ENCODE measurements at regions of chr14 and their contacts with region 1.

Region 1: DNA sequence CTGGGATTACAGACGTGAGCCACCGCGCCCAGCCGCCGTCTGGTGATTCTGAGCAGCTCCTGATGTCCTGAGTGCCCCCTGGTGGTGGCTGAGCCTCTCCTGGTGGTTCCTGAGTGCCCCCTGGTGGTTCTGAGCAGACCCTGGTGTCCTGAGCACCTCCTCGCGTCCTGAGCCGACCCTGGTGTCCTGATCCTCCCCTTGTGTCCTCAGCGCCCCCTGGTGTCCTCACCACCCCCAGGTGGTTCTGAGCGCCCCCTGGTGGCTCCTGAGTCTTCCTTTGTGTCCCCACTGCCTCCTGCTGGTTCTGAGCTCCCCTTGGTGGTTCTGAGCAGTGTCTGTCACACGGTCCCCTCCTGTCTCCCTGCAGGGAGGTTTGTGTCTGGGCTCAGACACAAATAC is 1304.9 kb downstream of the TMEM121 start:
- DNase-seq: peak in 11 of 14 experiments; percentile 26 to 80 (median 47)
- ATAC-seq: peak; percentile 58
- H3K4me3 ChIP-seq: no peak overlapping the region
- H3K4me3 Mint-ChIP-seq: no peak overlapping the region
- H3K27ac ChIP-seq: no peak overlapping the region
- H3K27ac Mint-ChIP-seq: peak overlapping the region; percentile 35
- H3K4me1 ChIP-seq: no peaks in the 10 kb centered on the region
- H3K4me1 Mint-ChIP-seq: no peaks in the 10 kb centered on the region
- H3K27me3 ChIP-seq: no peaks in the 10 kb centered on the region
- H3K27me3 Mint-ChIP-seq: no peaks in the 10 kb centered on the region
- CTCF ChIP-seq: peak; percentile 30

Region 2: DNA sequence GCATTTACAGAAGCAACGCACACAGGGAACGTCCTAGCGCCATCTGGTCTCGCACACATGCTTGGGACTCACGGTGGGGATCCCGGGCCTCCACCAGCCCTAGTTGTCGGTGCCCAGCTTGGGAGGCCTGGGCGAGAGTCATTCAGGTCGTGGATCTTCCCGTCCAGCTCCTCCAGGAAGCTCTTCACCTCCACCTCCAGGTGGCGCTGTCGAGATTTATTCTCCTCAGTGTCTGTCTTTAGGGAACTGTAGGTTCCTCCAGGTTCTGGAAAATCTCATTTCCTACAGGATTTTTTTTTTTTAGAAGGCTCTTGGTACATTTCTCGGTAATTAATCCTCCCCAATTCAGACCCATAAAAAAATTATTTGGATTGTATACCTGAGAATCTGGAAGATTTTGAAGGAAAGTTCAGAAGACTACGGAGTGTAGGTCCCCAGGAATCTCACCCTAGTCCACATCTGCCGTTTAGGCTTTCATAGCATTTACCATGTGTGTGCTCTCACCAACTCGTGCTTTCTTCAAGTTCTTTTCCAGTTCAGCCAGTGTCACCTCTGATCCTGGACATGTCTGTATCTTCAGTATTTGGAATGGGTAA is 394.9 kb before region 1 on chr14:
- CTCF ChIA-PET with region 1: no interaction called
- POLR2A ChIA-PET with region 1: no interaction called
- intact Hi-C with region 1: no loop called
- DNase-seq: peak; percentile 48 to 77 (median 67)
- ATAC-seq: no peak
- H3K4me3 ChIP-seq: no peak overlapping the region
- H3K4me3 Mint-ChIP-seq: no peak overlapping the region
- H3K27ac ChIP-seq: no peak overlapping the region
- H3K27ac Mint-ChIP-seq: no peak overlapping the region
- H3K4me1 ChIP-seq: no peaks in the 10 kb centered on the region
- H3K4me1 Mint-ChIP-seq: peaks cover 5% of the 10 kb centered on the region
- H3K27me3 ChIP-seq: no peaks in the 10 kb centered on the region
- H3K27me3 Mint-ChIP-seq: peaks cover 24% of the 10 kb centered on the region
- CTCF ChIP-seq: peak; percentile 74

Region 3: DNA sequence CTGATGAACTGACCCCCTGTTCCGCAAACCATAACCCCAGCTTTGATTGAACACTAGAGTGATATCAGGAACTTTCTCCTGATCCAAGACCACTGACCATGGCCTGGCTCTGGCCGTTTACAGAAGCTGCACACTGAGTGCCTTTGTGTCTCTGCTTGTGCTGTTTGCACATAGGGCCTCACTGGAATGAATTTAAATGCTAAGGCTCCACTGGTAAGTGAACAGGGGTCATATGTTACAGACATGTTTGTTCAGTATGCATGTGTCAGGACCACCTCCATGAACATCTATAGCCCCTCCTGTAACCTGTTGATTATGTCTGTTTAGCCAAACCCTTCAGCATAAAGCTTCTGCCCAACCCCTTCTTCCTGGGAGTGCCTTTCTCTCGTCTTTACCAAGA is 65.2 kb before region 1 on chr14:
- CTCF ChIA-PET with region 1: no interaction called
- POLR2A ChIA-PET with region 1: no interaction called
- intact Hi-C with region 1: no loop called
- DNase-seq: no peak
- ATAC-seq: no peak
- H3K4me3 ChIP-seq: no peak overlapping the region
- H3K4me3 Mint-ChIP-seq: peak overlapping the region; percentile 52
- H3K27ac ChIP-seq: no peak overlapping the region
- H3K27ac Mint-ChIP-seq: no peak overlapping the region
- H3K4me1 ChIP-seq: peaks cover 26% of the 10 kb centered on the region
- H3K4me1 Mint-ChIP-seq: peaks cover 52% of the 10 kb centered on the region
- H3K27me3 ChIP-seq: no peaks in the 10 kb centered on the region
- H3K27me3 Mint-ChIP-seq: no peaks in the 10 kb centered on the region
- CTCF ChIP-seq: no peak

Region 4: GRCh38 chr14:106790189-106791036 is 40.9 kb before region 1 on chr14:
- CTCF ChIA-PET with region 1: interaction called, 10 read pairs
- POLR2A ChIA-PET with region 1: no interaction called
- intact Hi-C with region 1: no loop called
- DNase-seq: peak; percentile 52 to 86 (median 66)
- ATAC-seq: peak; percentile 69
- H3K4me3 ChIP-seq: no peak overlapping the region
- H3K4me3 Mint-ChIP-seq: no peak overlapping the region
- H3K27ac ChIP-seq: no peak overlapping the region
- H3K27ac Mint-ChIP-seq: no peak overlapping the region
- H3K4me1 ChIP-seq: peaks cover 9% of the 10 kb centered on the region
- H3K4me1 Mint-ChIP-seq: peaks cover 16% of the 10 kb centered on the region
- H3K27me3 ChIP-seq: no peaks in the 10 kb centered on the region
- H3K27me3 Mint-ChIP-seq: peaks cover 10% of the 10 kb centered on the region
- CTCF ChIP-seq: peak; percentile 90

Region 5: DNA sequence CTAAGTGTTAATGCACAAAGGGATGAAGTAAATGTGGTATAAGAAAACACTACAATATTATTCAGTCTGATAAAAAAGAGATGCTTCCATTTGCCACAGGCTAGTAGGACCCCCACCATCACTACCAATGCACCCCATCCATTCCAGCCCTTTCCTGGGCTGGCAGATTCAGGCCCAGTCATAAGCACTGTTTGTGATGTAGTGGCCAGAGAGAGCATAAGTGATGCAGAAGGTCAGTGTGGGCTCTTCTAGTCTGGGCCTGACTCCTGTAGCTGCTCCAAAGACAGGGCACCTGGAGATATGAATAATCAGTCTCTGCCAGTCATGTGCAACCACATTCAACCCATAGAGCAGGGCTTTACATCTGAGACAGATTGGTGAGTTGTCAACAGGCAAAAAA is 10.2 kb before region 1 on chr14:
- CTCF ChIA-PET with region 1: interaction called, 10 read pairs
- POLR2A ChIA-PET with region 1: no interaction called
- intact Hi-C with region 1: no loop called
- DNase-seq: no peak
- ATAC-seq: no peak
- H3K4me3 ChIP-seq: no peak overlapping the region
- H3K4me3 Mint-ChIP-seq: no peak overlapping the region
- H3K27ac ChIP-seq: no peak overlapping the region
- H3K27ac Mint-ChIP-seq: no peak overlapping the region
- H3K4me1 ChIP-seq: no peaks in the 10 kb centered on the region
- H3K4me1 Mint-ChIP-seq: no peaks in the 10 kb centered on the region
- H3K27me3 ChIP-seq: peaks cover 4 to 6% of the 10 kb centered on the region in 2 experiments
- H3K27me3 Mint-ChIP-seq: peaks cover 13% of the 10 kb centered on the region
- CTCF ChIP-seq: no peak

Region 6: GRCh38 chr14:106844608-106845285 is 13.4 kb after region 1 on chr14:
- CTCF ChIA-PET with region 1: interaction called, 32 read pairs
- POLR2A ChIA-PET with region 1: interaction called, 4 read pairs
- intact Hi-C with region 1: no loop called
- DNase-seq: peak; percentile 47 to 87 (median 62)
- ATAC-seq: peak; percentile 80
- H3K4me3 ChIP-seq: peak overlapping the region; percentile 90
- H3K4me3 Mint-ChIP-seq: peak overlapping the region; percentile 96
- H3K27ac ChIP-seq: peak overlapping the region; percentile 81 to 82
- H3K27ac Mint-ChIP-seq: peak overlapping the region; percentile 52
- H3K4me1 ChIP-seq: peaks cover 19% of the 10 kb centered on the region
- H3K4me1 Mint-ChIP-seq: peaks cover 46% of the 10 kb centered on the region
- H3K27me3 ChIP-seq: no peaks in the 10 kb centered on the region
- H3K27me3 Mint-ChIP-seq: no peaks in the 10 kb centered on the region
- CTCF ChIP-seq: no peak

Region 7: DNA sequence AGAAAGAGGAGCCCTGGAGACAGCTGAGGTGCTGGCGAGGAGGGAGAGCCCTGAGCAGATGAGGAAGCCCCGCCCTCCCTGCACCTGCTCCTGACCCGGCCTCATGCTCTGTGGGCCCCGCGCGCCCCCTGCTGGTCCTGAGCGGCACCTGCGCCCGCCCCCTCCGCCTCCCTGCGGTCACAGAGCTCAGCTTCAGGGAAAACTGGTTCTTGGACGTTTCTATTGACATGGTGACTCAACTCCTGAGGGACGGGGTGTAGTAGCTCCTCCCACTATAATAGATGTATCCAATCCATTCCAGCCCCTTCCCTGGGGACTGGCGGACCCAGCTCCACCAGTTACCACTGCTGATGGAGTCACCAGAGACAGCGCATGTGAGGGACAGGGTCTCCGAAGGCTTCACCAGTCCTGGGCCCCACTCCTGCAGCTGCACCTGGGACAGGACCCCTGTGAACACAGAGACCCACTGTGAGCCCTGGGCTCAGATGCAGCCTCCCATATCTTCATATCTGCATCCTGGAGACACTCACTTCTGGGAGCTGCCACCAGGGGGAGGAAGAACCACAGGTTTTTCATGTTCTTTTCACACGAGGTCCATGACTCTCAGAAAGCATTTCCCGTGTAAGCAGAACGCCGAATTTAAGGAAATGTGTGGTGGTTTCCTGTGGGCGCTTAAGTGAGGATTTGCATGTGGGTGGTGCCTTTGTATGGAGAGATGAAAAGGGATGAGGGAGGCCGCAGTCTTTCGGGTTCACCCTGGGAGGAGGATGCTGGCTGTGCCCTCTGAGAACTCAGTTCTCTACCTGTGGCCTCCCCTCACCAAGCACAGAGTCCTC is 41.5 kb after region 1 on chr14:
- CTCF ChIA-PET with region 1: interaction called, 21 read pairs
- POLR2A ChIA-PET with region 1: no interaction called
- intact Hi-C with region 1: no loop called
- DNase-seq: peak; percentile 68 to 87 (median 80)
- ATAC-seq: peak; percentile 80
- H3K4me3 ChIP-seq: peak overlapping the region; percentile 22
- H3K4me3 Mint-ChIP-seq: peak overlapping the region; percentile 51
- H3K27ac ChIP-seq: no peak overlapping the region
- H3K27ac Mint-ChIP-seq: no peak overlapping the region
- H3K4me1 ChIP-seq: peaks cover 19% of the 10 kb centered on the region
- H3K4me1 Mint-ChIP-seq: peaks cover 23% of the 10 kb centered on the region
- H3K27me3 ChIP-seq: peaks cover 14% of the 10 kb centered on the region in 2 experiments
- H3K27me3 Mint-ChIP-seq: peaks cover 42% of the 10 kb centered on the region
- CTCF ChIP-seq: peak; percentile 81